Activated B cell treated with CpG ODN at 0.5 μM for 24 hours (primary cell): ENCODE measurements at regions of chr12 and their contacts with region 1.

Region 1: GRCh38 chr12:54398995-54399793 is 14.7 kb upstream of the ZNF385A start:
- DNase-seq: peak; percentile 79
- ATAC-seq: peak; percentile 99
- H3K4me3 Mint-ChIP-seq: no peak overlapping the region
- H3K27ac Mint-ChIP-seq: no peak overlapping the region
- H3K4me1 Mint-ChIP-seq: peaks cover 2% of the 10 kb centered on the region
- H3K27me3 Mint-ChIP-seq: no peaks in the 10 kb centered on the region
- CTCF ChIP-seq: peak; percentile 59

Region 2: GRCh38 chr12:53727310-53728041 is 671.7 kb before region 1 on chr12 and contains the start of gene CALCOCO1:
- CTCF ChIA-PET with region 1: no interaction called
- POLR2A ChIA-PET with region 1: no interaction called
- intact Hi-C with region 1: loop called (anchors 10 kb)
- DNase-seq: peak; percentile 90
- ATAC-seq: peak; percentile 97
- H3K4me3 Mint-ChIP-seq: peak within 1 kb of the TSS; percentile 97
- H3K27ac Mint-ChIP-seq: peak within 1 kb of the TSS; percentile 88
- H3K4me1 Mint-ChIP-seq: peaks cover 24% of the 10 kb centered on the region
- H3K27me3 Mint-ChIP-seq: no peaks in the 10 kb centered on the region
- CTCF ChIP-seq: no peak
- total RNA-seq, gene CALCOCO1: 44.2 and 59.5 TPM in 2 replicates

Region 3: DNA sequence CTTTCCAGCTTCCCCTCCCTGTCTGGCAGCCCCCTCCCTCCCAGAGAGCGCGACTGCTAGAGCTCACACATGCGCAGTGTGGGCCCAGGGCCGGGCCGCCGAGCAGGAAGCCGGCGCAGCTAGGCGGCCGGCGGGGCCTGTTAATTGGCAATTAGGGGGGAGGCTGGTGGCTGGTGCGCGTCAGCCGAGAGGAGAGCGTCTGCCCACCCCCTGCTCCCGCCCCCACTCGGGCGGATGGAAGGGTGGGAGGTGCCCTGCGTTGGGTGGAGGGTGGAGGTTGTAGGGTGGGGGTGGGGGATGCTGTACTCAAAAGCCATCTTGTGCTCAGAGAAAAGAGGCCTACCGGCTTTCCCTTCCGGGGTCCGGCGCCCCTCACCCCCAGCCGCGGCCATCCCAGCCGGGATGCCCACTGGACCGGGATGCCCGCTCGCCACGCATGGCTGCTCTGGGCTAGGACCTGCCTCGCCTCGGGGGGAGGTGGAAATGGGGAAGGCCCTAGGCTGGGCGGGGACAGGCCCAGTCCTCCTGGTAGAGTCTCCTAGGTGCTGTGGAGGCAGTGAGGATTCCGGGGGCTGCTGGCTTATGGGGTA is 381.2 kb before region 1 on chr12:
- CTCF ChIA-PET with region 1: no interaction called
- POLR2A ChIA-PET with region 1: no interaction called
- intact Hi-C with region 1: no loop called
- DNase-seq: peak; percentile 67
- ATAC-seq: peak; percentile 88
- H3K4me3 Mint-ChIP-seq: peak overlapping the region; percentile 84
- H3K27ac Mint-ChIP-seq: peak overlapping the region; percentile 72
- H3K4me1 Mint-ChIP-seq: peaks cover 29% of the 10 kb centered on the region
- H3K27me3 Mint-ChIP-seq: peaks cover 64% of the 10 kb centered on the region
- CTCF ChIP-seq: no peak

Region 4: GRCh38 chr12:54028314-54029201 is 370.6 kb before region 1 on chr12 and contains the start of gene HOXC6:
- CTCF ChIA-PET with region 1: no interaction called
- POLR2A ChIA-PET with region 1: no interaction called
- intact Hi-C with region 1: no loop called
- DNase-seq: no peak
- ATAC-seq: no peak
- H3K4me3 Mint-ChIP-seq: peak within 1 kb of the TSS; percentile 24
- H3K27ac Mint-ChIP-seq: no peak within 1 kb of the TSS
- H3K4me1 Mint-ChIP-seq: peaks cover 24% of the 10 kb centered on the region
- H3K27me3 Mint-ChIP-seq: peaks cover 60% of the 10 kb centered on the region
- CTCF ChIP-seq: no peak
- total RNA-seq, gene HOXC6: not detected in 2 replicates

Region 5: GRCh38 chr12:54220092-54220557 is 179.1 kb before region 1 on chr12:
- CTCF ChIA-PET with region 1: interaction called, 3 read pairs
- POLR2A ChIA-PET with region 1: no interaction called
- intact Hi-C with region 1: loop called (anchors 1 kb)
- DNase-seq: peak; percentile 58
- ATAC-seq: peak; percentile 49
- H3K4me3 Mint-ChIP-seq: no peak overlapping the region
- H3K27ac Mint-ChIP-seq: no peak overlapping the region
- H3K4me1 Mint-ChIP-seq: peaks cover 35% of the 10 kb centered on the region
- H3K27me3 Mint-ChIP-seq: no peaks in the 10 kb centered on the region
- CTCF ChIP-seq: no peak

Region 6: DNA sequence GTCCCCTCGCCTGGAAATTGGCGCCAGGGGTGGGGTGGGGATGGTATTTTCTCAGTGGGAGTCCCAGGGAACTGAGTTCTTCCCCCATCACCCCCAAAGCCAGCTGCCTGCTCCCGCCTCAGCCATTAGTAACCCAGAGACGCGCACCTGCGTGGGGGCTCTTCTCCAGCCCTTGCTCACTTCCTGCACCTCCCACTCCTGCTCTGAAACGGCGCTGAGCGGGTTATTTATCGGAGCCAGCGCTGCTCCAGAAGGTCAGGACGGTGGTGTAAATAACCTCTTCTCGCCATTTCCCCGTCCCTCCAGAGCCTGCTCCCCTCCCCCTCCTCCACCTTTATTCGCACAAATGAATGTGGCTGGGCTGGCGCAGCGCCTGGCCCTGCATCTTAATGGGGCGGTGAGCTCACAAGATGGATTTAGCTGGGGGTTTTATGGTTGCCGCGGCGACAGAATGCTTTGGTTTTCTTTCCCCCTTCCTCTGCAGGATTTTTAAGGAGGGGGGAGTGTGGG is 47.1 kb before region 1 on chr12:
- CTCF ChIA-PET with region 1: no interaction called
- POLR2A ChIA-PET with region 1: no interaction called
- intact Hi-C with region 1: no loop called
- DNase-seq: no peak
- ATAC-seq: peak; percentile 28
- H3K4me3 Mint-ChIP-seq: no peak overlapping the region
- H3K27ac Mint-ChIP-seq: no peak overlapping the region
- H3K4me1 Mint-ChIP-seq: peaks cover 9% of the 10 kb centered on the region
- H3K27me3 Mint-ChIP-seq: no peaks in the 10 kb centered on the region
- CTCF ChIP-seq: no peak

Region 7: GRCh38 chr12:54379401-54380201 is 19.6 kb before region 1 on chr12:
- CTCF ChIA-PET with region 1: interaction called, 30 read pairs
- POLR2A ChIA-PET with region 1: no interaction called
- intact Hi-C with region 1: loop called (anchors 1 kb)
- DNase-seq: peak; percentile 84
- ATAC-seq: peak; percentile 92
- H3K4me3 Mint-ChIP-seq: peak overlapping the region; percentile 65
- H3K27ac Mint-ChIP-seq: peak overlapping the region; percentile 24
- H3K4me1 Mint-ChIP-seq: peaks cover 38% of the 10 kb centered on the region
- H3K27me3 Mint-ChIP-seq: no peaks in the 10 kb centered on the region
- CTCF ChIP-seq: peak; percentile 99

Region 8: DNA sequence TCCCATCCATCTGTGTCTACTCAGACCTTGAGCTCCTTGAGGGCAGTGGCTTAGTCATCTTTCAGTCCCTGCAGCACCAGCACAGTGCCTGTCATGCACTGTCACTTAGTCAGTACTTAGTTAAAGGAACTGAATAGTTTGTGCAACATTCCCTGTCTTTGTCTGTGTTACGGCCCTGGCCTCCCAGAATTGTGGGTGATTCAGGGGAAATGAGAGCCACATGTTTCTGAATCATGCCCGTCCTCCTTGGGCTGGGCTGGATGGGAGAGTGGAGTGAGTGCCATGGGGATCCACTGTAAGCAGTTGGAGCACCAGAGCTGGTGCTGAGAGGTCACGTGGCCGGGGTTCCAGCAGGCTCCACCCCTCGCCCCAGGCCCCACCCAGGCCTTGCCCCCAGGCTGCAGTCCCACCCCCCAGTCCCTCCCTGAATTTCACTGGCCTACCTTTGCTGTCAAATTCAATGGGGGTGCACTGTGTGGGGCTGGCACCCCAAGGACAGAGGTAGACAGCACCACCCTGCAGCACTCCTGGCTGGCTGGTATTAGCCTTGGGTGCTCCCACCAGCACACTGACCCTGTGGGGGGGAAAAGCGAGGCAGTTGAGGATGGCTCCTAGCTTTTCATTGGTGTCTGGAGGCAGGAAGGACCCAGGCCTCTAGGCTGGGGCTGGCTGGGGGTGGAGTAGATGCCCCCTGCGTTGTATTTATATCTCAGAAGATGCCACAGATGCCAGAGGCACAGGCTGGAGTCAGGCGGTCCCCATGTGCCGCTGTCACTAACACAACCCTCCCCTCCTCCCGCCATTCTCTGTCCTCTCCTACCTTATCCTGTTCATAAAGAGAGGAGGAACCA is 12.4 kb after region 1 on chr12:
- CTCF ChIA-PET with region 1: interaction called, 143 read pairs
- POLR2A ChIA-PET with region 1: interaction called, 3 read pairs
- intact Hi-C with region 1: loop called (anchors 2 kb)
- DNase-seq: no peak
- ATAC-seq: no peak
- H3K4me3 Mint-ChIP-seq: no peak overlapping the region
- H3K27ac Mint-ChIP-seq: peak overlapping the region; percentile 12
- H3K4me1 Mint-ChIP-seq: peaks cover 58% of the 10 kb centered on the region
- H3K27me3 Mint-ChIP-seq: no peaks in the 10 kb centered on the region
- CTCF ChIP-seq: no peak

Region 9: GRCh38 chr12:54439521-54440255 is 40.5 kb after region 1 on chr12:
- CTCF ChIA-PET with region 1: interaction called, 361 read pairs
- POLR2A ChIA-PET with region 1: interaction called, 4 read pairs
- intact Hi-C with region 1: loop called (anchors 1 kb)
- DNase-seq: no peak
- ATAC-seq: peak; percentile 79
- H3K4me3 Mint-ChIP-seq: no peak overlapping the region
- H3K27ac Mint-ChIP-seq: no peak overlapping the region
- H3K4me1 Mint-ChIP-seq: peaks cover 7% of the 10 kb centered on the region
- H3K27me3 Mint-ChIP-seq: peaks cover 4% of the 10 kb centered on the region
- CTCF ChIP-seq: peak; percentile 22

Region 10: DNA sequence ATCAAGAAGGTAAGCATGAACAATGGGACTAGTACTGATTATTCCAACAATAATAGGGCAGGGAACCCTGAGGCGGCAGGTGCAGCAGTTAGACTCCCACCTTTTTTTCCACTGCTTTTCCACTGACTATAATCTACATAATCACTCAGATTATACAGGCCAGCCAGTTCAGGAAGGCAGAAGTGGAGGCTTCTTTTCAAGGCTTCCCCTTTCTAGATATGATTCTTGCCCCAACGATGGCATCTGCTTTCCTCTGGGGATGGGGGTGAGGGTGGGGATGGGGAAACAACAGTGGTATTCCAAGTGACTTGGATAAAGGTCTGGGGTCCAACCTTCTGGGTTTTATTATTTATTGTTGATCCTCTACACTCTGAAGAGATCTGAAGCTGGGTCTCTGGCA is 98.7 kb after region 1 on chr12:
- CTCF ChIA-PET with region 1: interaction called, 6 read pairs
- POLR2A ChIA-PET with region 1: no interaction called
- intact Hi-C with region 1: loop called (anchors 2 kb)
- DNase-seq: no peak
- ATAC-seq: peak; percentile 4
- H3K4me3 Mint-ChIP-seq: peak overlapping the region; percentile 98
- H3K27ac Mint-ChIP-seq: peak overlapping the region; percentile 97
- H3K4me1 Mint-ChIP-seq: peaks cover 49% of the 10 kb centered on the region
- H3K27me3 Mint-ChIP-seq: no peaks in the 10 kb centered on the region
- CTCF ChIP-seq: no peak

Region 11: DNA sequence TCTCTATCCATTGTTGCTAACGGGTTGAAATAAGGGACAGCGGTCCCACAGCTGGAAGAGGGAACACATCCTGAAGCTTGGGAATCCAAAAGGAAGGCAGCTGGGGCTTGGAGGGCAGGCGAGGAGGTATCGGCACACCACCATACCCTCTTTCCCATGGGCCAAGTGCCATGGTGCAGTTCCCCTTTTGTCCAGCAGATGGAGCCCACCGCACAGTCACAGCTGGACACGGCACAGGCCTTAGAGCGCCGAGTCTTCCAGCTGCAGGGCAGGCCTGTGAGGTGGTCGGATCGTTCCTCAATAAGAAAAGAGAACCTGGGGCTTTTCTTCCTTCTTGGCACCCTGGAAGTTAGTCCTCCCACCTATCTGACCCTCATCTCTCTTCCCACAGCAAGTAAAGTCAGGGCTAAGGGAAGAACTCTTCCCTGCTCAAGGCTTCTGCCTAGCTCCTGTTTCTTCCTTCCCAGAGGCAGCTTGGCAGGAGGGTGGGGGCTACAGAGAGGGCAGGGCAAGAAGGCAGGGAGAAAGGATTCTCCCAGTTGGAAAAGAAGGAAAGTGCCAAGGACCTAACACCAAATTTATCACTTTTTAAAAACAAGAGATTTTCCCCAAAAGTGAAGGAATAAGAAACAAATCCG is 180.6 kb after region 1 on chr12:
- CTCF ChIA-PET with region 1: no interaction called
- POLR2A ChIA-PET with region 1: no interaction called
- intact Hi-C with region 1: no loop called
- DNase-seq: peak; percentile 79
- ATAC-seq: peak; percentile 99
- H3K4me3 Mint-ChIP-seq: no peak overlapping the region
- H3K27ac Mint-ChIP-seq: no peak overlapping the region
- H3K4me1 Mint-ChIP-seq: peaks cover 6% of the 10 kb centered on the region
- H3K27me3 Mint-ChIP-seq: peaks cover 14% of the 10 kb centered on the region
- CTCF ChIP-seq: peak; percentile 80